Activated naive CD4-positive, alpha-beta T cell treated with anti-CD3 and anti-CD28 coated beads for 36 hours (primary cell): ENCODE measurements at regions of chr3 and their contacts with region 1.

Region 1: GRCh38 chr3:183468424-183468823 is 40.0 kb upstream of the MCF2L2 start:
- DNase-seq: no peak
- H3K4me3 Mint-ChIP-seq: no peak overlapping the region
- H3K27ac Mint-ChIP-seq: peak overlapping the region; percentile 87
- H3K4me1 Mint-ChIP-seq: peaks cover 27% of the 10 kb centered on the region
- H3K27me3 Mint-ChIP-seq: no peaks in the 10 kb centered on the region

Region 2: GRCh38 chr3:183210839-183211341 is 257.5 kb before region 1 on chr3:
- CTCF ChIA-PET with region 1: no interaction called
- intact Hi-C with region 1: loop called (anchors 1 kb)
- DNase-seq: peak; percentile 73
- H3K4me3 Mint-ChIP-seq: no peak overlapping the region
- H3K27ac Mint-ChIP-seq: peak overlapping the region; percentile 85
- H3K4me1 Mint-ChIP-seq: peaks cover 63% of the 10 kb centered on the region
- H3K27me3 Mint-ChIP-seq: no peaks in the 10 kb centered on the region

Region 3: DNA sequence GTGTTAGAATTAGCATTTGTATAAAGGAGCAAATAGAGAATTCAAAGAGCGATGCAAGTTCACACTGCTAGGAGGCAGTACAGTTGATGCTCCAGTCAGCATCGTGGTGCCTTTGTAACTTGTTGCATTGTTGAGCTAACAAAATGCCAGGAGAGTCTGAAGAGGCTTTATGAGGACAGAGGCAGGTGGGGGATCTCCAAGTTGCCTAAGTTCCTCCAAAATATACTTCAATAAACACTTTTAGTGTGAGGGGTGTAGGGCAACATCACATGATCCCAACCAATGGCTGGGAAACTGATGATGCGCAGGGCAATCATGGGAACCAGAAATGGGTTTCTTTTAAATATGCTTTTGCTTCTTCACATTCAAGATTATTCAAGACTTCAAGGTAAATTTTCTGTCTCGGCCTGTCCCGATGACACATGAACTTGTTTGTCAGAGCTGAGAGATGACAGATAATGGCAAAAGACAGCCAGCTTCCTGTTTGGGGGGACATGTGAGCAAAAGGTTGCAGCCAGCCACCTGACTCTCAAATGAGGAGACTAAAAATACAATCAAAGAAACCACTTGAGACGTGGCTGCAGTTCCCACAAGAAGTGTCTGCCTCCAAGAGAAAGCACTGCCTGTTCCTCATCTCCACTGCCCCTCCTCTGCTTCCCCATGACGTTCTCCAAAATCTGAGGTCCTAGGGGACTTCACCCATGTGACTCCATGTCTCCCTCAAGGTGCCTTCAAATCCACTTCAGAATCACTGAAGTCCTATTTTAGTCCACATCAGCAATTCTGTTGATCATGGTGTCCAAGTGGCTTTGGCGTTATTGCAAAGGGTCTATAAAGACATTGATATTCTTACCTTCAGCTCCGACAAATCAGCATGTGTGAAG is 47.8 kb after region 1 on chr3:
- CTCF ChIA-PET with region 1: no interaction called
- intact Hi-C with region 1: loop called (anchors 1 kb)
- DNase-seq: peak; percentile 80
- H3K4me3 Mint-ChIP-seq: peak overlapping the region; percentile 17
- H3K27ac Mint-ChIP-seq: peak overlapping the region; percentile 90
- H3K4me1 Mint-ChIP-seq: peaks cover 81% of the 10 kb centered on the region
- H3K27me3 Mint-ChIP-seq: no peaks in the 10 kb centered on the region

Region 4: DNA sequence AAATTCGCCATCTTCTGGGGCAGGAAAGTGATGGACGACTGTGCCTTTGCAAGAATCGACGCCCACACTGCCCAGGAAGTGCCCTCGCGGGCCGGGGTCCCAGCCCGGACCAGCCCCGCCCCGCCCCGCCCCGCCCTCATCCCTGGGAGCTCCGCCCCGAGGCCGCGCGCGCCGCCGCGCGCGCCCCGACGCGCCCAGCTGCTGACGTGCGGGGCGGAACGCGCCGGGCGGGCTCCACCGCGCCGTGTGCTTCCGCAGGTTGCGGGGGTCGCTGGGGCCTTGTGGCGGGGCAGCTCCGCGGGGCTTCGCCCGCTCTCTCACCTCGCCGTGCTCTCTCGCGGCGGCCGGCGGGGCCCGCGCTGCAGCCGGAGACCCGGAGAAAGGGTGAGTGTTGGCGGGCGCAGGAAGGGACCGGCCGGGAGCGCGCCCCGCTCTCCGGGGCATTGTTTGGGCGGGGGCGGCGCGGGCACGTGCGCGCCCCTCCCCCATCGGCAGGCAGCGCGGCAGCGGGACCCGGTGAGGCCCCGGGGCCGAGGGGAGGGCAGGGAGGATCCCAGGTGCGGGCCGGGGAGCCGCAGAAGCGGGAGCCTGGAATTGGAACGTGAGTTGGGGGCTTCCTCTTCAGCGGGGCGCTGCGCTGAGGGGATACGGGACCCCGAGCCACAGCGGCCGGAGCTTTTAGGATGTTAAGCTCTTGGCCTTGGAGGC is 229.3 kb after region 1 on chr3 and contains the start of gene YEATS2:
- CTCF ChIA-PET with region 1: interaction called, 4 read pairs
- intact Hi-C with region 1: loop called (anchors 1 kb)
- DNase-seq: peak; percentile 79
- H3K4me3 Mint-ChIP-seq: peak within 1 kb of the TSS; percentile 80
- H3K27ac Mint-ChIP-seq: peak within 1 kb of the TSS; percentile 91
- H3K4me1 Mint-ChIP-seq: peaks cover 28% of the 10 kb centered on the region
- H3K27me3 Mint-ChIP-seq: no peaks in the 10 kb centered on the region
- total RNA-seq, gene YEATS2: 38.1 to 39.0 TPM

Region 5: DNA sequence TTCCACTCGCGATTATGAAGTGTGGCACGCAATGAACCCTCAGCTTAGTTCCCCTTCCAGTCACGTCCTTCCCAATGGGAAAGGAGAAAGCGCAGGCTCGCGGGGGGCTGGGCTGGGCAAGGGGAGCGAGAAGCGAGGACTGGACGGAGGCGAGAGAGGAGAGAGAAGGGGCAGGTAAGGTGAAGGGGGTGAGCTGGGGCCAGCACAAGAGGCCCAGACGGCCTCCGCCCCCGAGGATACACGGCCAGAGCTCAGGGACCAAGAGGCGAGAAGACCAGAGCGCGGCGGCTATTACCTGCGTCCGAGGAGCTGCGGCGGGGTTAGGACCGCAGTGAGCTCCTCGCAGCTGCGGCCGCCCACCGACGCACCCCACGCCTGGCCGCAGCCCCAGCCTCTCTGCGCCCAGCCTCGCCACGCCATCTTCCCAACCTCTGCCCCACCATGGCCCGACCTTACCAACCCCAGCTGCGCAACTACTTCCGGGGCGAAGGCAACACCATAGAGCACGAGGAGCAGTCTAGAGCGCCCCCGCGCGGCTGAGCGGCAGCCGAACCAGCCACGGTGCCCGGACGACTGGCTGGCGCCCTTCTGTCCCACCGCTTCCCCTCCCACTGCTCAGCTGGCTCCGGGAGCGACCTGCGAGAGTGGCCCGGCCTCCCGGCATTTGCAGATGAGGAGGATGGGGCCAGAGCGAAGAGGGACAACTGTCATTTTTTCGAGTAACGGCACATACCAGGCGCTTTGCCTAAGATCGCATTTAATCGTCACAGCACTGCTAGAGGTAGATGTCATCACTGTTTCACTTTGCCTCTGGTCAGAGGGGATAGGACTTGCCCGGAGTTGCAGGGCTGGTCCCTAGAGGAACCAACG is 416.2 kb after region 1 on chr3 and contains the start of gene PARL:
- CTCF ChIA-PET with region 1: interaction called, 3 read pairs
- intact Hi-C with region 1: loop called (anchors 1 kb)
- DNase-seq: peak; percentile 98
- H3K4me3 Mint-ChIP-seq: peak within 1 kb of the TSS; percentile 94
- H3K27ac Mint-ChIP-seq: peak within 1 kb of the TSS; percentile 88
- H3K4me1 Mint-ChIP-seq: peaks cover 31% of the 10 kb centered on the region
- H3K27me3 Mint-ChIP-seq: no peaks in the 10 kb centered on the region
- total RNA-seq, gene PARL: 92.0 to 92.8 TPM